CD4-positive, alpha-beta T cell (primary cell): ENCODE measurements at regions of chrX and their contacts with region 1.

Region 1: GRCh38 chrX:12955882-12956703 is 18.8 kb upstream of the TMSB4X start:
- DNase-seq: peak in 11 of 14 experiments; percentile 38 to 84 (median 61)
- ATAC-seq: peak; percentile 18
- H3K4me3 ChIP-seq: peak overlapping the region; percentile 47
- H3K4me3 Mint-ChIP-seq: peak overlapping the region; percentile 89
- H3K27ac ChIP-seq: peak overlapping the region; percentile 87 to 89
- H3K27ac Mint-ChIP-seq: peak overlapping the region; percentile 95
- H3K4me1 ChIP-seq: peaks cover 80% of the 10 kb centered on the region
- H3K4me1 Mint-ChIP-seq: peaks cover 87% of the 10 kb centered on the region
- H3K27me3 ChIP-seq: no peaks in the 10 kb centered on the region
- H3K27me3 Mint-ChIP-seq: no peaks in the 10 kb centered on the region
- CTCF ChIP-seq: no peak

Region 2: DNA sequence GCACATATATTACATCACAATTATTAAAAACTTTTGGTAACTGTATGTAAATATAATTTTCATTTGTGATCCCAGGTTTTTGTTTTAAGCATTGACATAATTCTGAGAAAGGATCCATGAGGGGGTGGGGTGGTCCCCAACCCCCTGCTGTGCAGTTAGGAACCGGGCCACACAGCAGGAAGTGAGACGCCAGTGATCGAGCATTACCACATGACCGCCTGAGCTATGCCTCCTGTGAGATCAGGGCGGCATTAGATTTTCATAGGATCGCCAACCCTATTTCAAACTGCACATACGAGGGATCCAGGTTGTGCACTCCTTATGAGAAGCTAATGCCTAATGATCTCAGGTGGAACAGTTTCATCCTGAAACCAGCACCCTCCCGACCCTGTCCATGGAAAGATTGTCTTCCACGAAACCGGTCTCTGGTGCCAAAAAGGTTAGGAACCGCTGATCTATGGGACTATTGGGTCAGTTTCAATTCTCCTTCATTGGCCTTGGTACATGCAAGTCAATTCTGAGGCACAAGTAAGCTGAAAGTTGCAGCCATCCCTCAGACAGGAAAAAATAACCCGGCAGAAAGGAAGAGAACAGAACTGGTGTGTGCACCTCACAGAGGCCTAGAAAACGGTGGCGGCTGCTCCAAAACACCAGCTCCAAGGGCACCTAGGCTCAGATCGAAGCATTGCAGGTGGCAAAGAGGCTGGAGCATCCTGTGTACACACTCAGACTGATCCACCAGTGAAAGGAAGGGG is 11.8 kb after region 1 on chrX:
- CTCF ChIA-PET with region 1: interaction called, 181 read pairs
- POLR2A ChIA-PET with region 1: interaction called, 1,050 read pairs
- intact Hi-C with region 1: loop called in 1 of 2 experiments (anchors 1 kb)
- DNase-seq: peak in 3 of 14 experiments; percentile 57 to 66 (median 58)
- ATAC-seq: peak; percentile 16
- H3K4me3 ChIP-seq: peak overlapping the region; percentile 42
- H3K4me3 Mint-ChIP-seq: peak overlapping the region; percentile 78
- H3K27ac ChIP-seq: peak overlapping the region; percentile 69 to 71
- H3K27ac Mint-ChIP-seq: peak overlapping the region; percentile 95
- H3K4me1 ChIP-seq: peaks cover 51% of the 10 kb centered on the region
- H3K4me1 Mint-ChIP-seq: peaks cover 53% of the 10 kb centered on the region
- H3K27me3 ChIP-seq: no peaks in the 10 kb centered on the region
- H3K27me3 Mint-ChIP-seq: no peaks in the 10 kb centered on the region
- CTCF ChIP-seq: no peak